ENCODE measurements at regions of chr11 and their contacts with region 1.

Region 1: DNA sequence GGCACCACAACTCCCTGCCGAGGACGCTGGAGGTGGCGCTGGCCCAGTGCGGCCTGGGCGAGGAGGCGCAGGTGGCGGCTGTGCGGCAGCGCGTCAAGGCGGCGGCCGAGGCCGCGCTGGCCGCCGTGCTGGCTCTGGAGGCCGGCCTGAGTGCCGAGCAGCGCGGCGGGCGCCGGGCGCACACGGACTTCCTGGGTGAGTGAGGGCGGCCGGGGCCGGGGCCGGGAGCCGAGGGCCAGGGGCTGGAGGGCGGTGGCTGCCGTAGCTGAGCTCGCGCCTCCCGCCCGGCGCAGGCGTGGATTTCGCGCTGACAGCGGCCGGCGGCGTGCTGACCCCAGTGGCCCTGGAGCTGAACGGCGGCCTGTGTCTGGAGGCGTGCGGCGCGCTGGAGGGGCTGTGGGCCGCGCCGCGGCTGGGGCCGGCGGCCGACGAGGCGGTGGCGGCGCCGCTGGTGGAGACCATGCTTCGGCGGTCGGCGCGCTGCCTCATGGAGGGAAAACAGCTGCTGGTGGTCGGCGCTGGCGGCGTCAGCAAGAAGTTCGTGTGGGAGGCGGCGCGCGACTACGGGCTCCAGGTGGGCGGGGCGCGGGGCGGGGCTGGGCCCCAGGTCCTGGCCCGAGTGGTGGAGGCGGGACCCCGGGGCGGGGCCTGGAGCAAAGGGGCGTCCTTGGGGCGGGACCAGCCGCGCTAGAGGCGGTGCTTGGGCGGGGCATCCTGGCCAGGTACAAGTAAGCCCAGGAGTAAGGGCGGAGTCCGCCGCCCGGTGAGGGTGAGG is 5.4 kb downstream of the CARNS1 start:
- DNase-seq: peak; percentile 93 to 97 (median 96)
- H3K4me3 ChIP-seq: peak overlapping the region in 6 of 7 experiments; percentile 28 to 73 (median 64)
- H3K27ac ChIP-seq: peak overlapping the region in 1 of 2 experiments; percentile 5
- H3K4me1 ChIP-seq: peaks cover 0 to 75% (median 53%) of the 10 kb centered on the region in 4 experiments
- H3K27me3 ChIP-seq: no peaks in the 10 kb centered on the region

Region 2: GRCh38 chr11:66768088-66768521 is 652.7 kb before region 1 on chr11:
- CTCF ChIA-PET with region 1: no interaction called
- POLR2A ChIA-PET with region 1: no interaction called
- DNase-seq: no peak
- H3K4me3 ChIP-seq: no peak overlapping the region
- H3K27ac ChIP-seq: no peak overlapping the region
- H3K4me1 ChIP-seq: no peaks in the 10 kb centered on the region
- H3K27me3 ChIP-seq: no peaks in the 10 kb centered on the region

Region 3: DNA sequence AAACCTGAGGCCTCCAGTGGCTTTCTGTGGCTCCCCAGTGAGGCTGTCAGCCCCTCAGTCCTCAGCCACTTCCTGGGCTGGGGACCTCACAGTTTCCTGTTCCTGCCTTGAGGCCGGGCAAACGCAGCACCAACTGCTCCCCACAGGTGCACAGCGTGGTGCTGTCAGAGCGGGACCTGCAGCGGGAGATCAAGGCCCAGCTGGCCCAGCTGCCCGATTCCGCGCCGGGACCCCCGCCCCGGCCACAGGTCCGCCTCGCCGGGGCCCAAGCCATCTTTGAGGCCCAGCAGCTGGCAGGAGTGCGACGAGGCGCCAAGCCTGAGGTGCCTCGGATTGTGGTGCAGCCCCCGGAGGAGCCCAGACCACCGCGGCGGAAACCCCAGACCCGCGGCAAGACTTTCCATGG is 11.6 kb before region 1 on chr11:
- CTCF ChIA-PET with region 1: interaction called, 60 read pairs
- POLR2A ChIA-PET with region 1: interaction called, 15 read pairs
- DNase-seq: peak; percentile 61 to 92 (median 85)
- H3K4me3 ChIP-seq: peak overlapping the region in 5 of 7 experiments; percentile 10 to 58 (median 56)
- H3K27ac ChIP-seq: peak overlapping the region in 1 of 2 experiments; percentile 64
- H3K4me1 ChIP-seq: peaks cover 8 to 94% (median 92%) of the 10 kb centered on the region in 4 experiments
- H3K27me3 ChIP-seq: no peaks in the 10 kb centered on the region

Measured in common myeloid progenitor, CD34-positive (primary cell).